Aorta (tissue), 5 donors: ENCODE measurements at regions of chr7 and their contacts with region 1.

Region 1: DNA sequence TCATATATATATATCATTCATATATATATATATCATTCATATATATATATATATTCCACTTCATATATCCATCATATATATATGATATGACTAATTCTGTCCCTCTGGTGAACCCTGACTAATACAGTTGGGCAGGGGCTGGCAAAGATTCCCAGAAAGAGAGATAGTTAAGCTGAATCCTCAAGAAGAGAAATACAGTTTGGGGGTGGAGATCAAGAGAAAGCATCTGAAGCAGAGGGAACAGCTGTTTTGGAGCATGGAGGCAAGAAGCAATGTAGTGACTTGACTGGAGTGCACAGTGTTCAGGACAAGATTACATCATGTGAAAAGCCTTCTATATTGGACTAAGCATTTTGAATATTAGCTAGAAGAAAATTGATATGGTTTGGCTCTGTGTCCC is 540.7 kb downstream of the MAGI2 start:
- DNase-seq: no peak
- ATAC-seq: no peak
- H3K4me3 ChIP-seq: no peak overlapping the region
- H3K27ac ChIP-seq: no peak overlapping the region
- H3K4me1 ChIP-seq: no peaks in the 10 kb centered on the region
- H3K27me3 ChIP-seq: no peaks in the 10 kb centered on the region

Region 2: GRCh38 chr7:78510580-78511188 is 402.1 kb before region 1 on chr7:
- intact Hi-C with region 1: loop called in 1 of 2 experiments (anchors 10 kb)
- DNase-seq: no peak
- ATAC-seq: no peak
- H3K4me3 ChIP-seq: no peak overlapping the region
- H3K27ac ChIP-seq: no peak overlapping the region
- H3K4me1 ChIP-seq: peaks cover 0 to 1% of the 10 kb centered on the region in 2 donors
- H3K27me3 ChIP-seq: no peaks in the 10 kb centered on the region

Region 3: DNA sequence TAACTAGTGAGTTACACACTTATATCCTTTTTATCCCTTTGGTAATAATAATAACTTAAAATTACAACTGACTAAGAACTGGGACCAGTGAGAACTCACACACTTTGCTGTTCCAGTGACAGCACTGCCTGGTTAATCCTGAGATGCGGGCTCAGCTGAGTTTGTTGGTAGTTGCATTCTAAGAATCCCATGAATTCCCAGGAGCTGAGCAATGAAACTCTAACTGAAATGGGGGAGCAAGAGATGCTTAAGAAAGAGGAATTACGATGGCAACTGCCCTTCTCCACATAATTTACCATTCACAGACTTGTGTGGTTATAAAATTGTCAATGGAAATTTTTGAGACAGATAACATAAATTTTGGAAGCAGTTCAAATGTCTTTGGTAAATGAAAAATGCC is 118.7 kb before region 1 on chr7:
- intact Hi-C with region 1: no loop called
- DNase-seq: no peak
- ATAC-seq: no peak
- H3K4me3 ChIP-seq: no peak overlapping the region
- H3K27ac ChIP-seq: no peak overlapping the region
- H3K4me1 ChIP-seq: no peaks in the 10 kb centered on the region
- H3K27me3 ChIP-seq: no peaks in the 10 kb centered on the region